Activated T-helper 2 cell treated with anti-CD3 and anti-CD28 coated beads, Interferon-gamma antibody, Interleukin-2, Interleukin-4, amounts not matched to agents 10 μg/mL and 5 μg/mL and 100 μg/mL, durations not matched to agents 14 hours and 24 hours and 36 hours (primary cell): ENCODE measurements at regions of chr5 and their contacts with region 1.

Region 1: DNA sequence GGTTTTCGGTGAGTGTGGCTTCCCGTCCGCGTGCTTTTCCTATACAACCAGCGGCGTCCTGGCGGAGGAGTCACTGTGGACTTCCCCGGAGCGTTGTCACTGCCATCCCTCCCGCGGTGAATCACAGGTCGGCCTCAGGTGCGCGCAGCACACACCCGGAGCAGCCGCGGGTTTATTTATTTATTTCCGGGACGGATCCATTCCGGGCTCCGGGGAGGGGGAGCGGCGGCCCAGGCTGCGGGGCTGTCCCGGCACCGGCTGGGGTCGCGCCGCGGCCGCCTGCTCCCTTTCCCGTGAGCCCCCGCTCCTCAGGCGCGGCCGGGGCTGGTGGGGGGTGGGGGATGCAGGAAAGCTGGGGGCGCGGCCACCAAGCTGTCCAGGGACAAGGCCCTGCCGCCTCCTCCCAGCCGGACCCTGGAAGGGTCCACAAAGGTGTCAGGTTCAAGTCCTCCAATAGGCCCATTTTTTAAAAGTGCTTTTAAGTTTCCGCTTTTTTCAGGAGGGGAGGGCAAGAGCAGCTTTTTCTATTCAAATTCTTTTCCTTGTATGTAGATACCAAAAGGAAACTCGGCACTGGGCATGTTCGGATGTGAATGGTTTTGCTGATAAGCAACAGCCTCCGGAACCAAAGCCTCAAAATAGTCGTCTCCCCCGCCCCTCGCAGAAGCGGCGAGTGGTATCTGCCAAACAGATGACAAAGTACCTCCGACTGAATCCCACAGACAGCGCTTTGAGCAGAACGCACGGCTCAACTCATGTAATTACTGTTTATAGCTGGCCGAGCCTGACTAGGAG is 192.5 kb downstream of the CD180 start:
- DNase-seq: peak; percentile 85
- H3K4me3 Mint-ChIP-seq: peak overlapping the region; percentile 82
- H3K27ac Mint-ChIP-seq: peak overlapping the region; percentile 82
- H3K4me1 Mint-ChIP-seq: peaks cover 56% of the 10 kb centered on the region
- H3K27me3 Mint-ChIP-seq: peaks cover 17% of the 10 kb centered on the region

Region 2: GRCh38 chr5:66821688-66822429 is 182.3 kb before region 1 on chr5:
- intact Hi-C with region 1: loop called (anchors 1 kb)
- DNase-seq: no peak
- H3K4me3 Mint-ChIP-seq: peak overlapping the region; percentile 15
- H3K27ac Mint-ChIP-seq: peak overlapping the region; percentile 83
- H3K4me1 Mint-ChIP-seq: peaks cover 29% of the 10 kb centered on the region
- H3K27me3 Mint-ChIP-seq: peaks cover 11% of the 10 kb centered on the region

Region 3: GRCh38 chr5:66987949-66988838 is 15.9 kb before region 1 on chr5:
- intact Hi-C with region 1: loop called (anchors 2 kb)
- DNase-seq: no peak
- H3K4me3 Mint-ChIP-seq: no peak overlapping the region
- H3K27ac Mint-ChIP-seq: no peak overlapping the region
- H3K4me1 Mint-ChIP-seq: peaks cover 8% of the 10 kb centered on the region
- H3K27me3 Mint-ChIP-seq: peaks cover 19% of the 10 kb centered on the region

Region 4: DNA sequence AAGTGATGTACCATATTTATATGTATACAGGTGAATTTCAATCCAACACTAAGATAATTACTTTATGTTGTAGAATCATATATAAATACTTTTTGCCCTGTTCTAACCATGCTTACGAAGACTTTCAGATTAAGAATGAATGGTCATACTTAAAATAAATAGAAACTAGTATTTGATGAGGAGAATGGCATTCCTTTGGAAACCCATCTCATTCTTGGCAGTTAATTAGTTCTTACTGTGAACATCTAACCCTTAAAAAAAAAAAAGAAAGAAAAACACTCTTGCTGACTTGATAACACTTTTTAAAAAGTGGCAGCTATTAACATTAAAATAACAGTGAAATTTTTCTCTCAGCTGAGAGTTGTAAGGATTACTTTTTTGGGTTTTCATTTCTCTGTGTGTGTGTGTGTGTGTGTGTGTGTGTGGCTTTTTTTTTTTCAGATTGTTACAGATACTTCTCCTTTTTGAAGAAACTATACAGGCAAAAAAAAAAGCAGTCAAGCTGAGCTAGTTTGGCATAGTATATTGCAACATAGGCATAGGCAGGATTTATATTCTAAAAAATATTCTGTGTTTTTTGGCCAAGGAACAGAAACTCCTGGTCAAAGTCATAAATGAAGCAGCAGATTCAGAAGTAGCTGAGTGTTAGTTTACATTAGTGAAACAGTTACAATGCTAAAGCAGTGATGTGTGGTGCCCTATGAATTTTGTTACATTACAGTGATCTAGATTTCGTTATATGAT is 29.0 kb after region 1 on chr5:
- intact Hi-C with region 1: loop called (anchors 1 kb)
- DNase-seq: no peak
- H3K4me3 Mint-ChIP-seq: no peak overlapping the region
- H3K27ac Mint-ChIP-seq: no peak overlapping the region
- H3K4me1 Mint-ChIP-seq: peaks cover 49% of the 10 kb centered on the region
- H3K27me3 Mint-ChIP-seq: no peaks in the 10 kb centered on the region

Region 5: DNA sequence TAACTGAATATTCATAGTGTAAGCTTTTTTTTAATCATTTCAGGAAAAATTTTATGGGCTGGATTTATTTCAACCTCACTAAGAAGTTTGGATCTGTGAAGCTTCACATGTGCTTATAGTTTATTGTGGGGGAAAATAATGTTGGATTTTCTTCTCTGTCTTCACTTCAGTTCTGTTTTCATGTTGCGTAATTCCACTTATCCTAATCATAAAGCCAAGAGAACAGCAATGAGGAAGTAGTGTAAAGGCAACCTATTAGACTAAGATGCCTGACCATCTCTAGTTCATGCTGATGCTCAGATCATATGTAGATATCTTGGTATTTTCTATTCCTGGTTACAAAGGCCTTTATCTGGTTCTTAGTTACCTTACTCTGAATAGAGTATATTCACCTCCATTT is 142.4 kb after region 1 on chr5:
- intact Hi-C with region 1: no loop called
- DNase-seq: no peak
- H3K4me3 Mint-ChIP-seq: no peak overlapping the region
- H3K27ac Mint-ChIP-seq: no peak overlapping the region
- H3K4me1 Mint-ChIP-seq: peaks cover 4% of the 10 kb centered on the region
- H3K27me3 Mint-ChIP-seq: no peaks in the 10 kb centered on the region

Region 6: DNA sequence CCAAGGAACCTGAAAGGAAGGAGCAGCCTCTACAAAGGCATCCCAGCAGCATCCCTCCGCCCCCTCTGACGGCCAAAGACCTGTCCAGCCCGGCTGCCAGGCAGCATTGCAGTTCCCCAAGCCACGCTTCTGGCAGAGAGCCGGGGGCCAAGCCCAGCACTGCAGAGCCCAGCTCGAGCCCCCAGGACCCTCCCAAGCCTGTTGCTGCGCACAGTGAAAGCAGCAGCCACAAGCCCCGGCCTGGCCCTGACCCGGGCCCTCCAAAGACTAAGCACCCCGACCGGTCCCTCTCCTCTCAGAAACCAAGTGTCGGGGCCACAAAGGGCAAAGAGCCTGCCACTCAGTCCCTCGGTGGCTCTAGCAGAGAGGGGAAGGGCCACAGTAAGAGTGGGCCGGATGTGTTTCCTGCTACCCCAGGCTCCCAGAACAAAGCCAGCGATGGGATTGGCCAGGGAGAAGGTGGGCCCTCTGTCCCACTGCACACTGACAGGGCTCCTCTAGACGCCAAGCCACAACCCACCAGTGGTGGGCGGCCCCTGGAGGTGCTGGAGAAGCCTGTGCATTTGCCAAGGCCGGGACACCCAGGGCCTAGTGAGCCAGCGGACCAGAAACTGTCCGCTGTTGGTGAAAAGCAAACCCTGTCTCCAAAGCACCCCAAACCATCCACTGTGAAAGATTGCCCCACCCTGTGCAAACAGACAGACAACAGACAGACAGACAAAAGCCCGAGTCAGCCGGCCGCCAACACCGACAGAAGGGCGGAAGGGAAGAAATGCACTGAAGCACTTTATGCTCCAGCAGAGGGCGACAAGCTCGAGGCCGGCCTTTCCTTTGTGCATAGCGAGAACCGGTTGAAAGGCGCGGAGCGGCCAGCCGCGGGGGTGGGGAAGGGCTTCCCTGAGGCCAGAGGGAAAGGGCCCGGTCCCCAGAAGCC is 161.7 kb after region 1 on chr5:
- intact Hi-C with region 1: loop called (anchors 1 kb)
- DNase-seq: peak; percentile 82
- H3K4me3 Mint-ChIP-seq: peak overlapping the region; percentile 84
- H3K27ac Mint-ChIP-seq: peak overlapping the region; percentile 93
- H3K4me1 Mint-ChIP-seq: peaks cover 49% of the 10 kb centered on the region
- H3K27me3 Mint-ChIP-seq: no peaks in the 10 kb centered on the region